Transverse colon (tissue), 4 donors: ENCODE measurements at regions of chr5 and their contacts with region 1.

Region 1: GRCh38 chr5:61055434-61056006 is 106.7 kb downstream of the SMIM15 start:
- DNase-seq: no peak
- H3K4me3 ChIP-seq: no peak overlapping the region
- H3K27ac ChIP-seq: no peak overlapping the region
- H3K4me1 ChIP-seq: peaks cover 0 to 21% (median 6%) of the 10 kb centered on the region in 4 donors
- H3K27me3 ChIP-seq: no peaks in the 10 kb centered on the region
- CTCF ChIP-seq: peak; percentile 53 to 77 (median 65)
- EP300 ChIP-seq: no peak
- POLR2A ChIP-seq: no peak

Region 2: DNA sequence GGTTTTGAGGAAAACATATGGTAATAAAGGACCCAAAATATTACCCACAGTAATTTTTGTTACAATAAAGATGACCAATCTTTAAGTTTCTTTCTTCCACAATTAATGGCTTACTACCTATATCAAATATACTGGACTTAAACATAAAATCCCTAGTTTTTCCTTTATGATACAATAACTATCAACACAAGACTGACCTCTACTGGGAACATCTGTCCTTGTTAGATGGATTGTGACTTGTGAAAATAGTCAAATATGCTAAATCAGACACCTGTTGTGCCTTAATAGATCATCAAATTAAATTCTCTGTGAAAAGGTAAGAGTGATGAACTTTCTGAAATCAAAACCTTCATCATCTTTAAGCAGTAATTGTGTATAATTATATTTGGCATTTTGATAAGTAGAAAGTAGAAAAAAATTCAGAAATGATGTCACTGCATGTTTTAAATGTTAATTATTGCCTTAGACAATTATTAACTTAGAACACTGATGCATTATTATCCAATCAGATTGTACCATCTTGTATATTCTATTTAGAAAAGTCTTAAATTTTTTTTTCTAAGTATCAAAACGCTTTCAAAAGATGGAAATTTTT is 469.1 kb before region 1 on chr5:
- in situ Hi-C with region 1: no loop called
- intact Hi-C with region 1: no loop called
- DNase-seq: no peak
- H3K4me3 ChIP-seq: no peak overlapping the region
- H3K27ac ChIP-seq: no peak overlapping the region
- H3K4me1 ChIP-seq: peaks cover 0 to 10% (median 6%) of the 10 kb centered on the region in 4 donors
- H3K27me3 ChIP-seq: no peaks in the 10 kb centered on the region
- CTCF ChIP-seq: peak in 3 of 5 experiments; percentile 24 to 52 (median 34)
- EP300 ChIP-seq: no peak
- POLR2A ChIP-seq: no peak

Region 3: GRCh38 chr5:60944904-60945812 is 110.4 kb before region 1 on chr5 and contains the starts of genes ERCC8 and NDUFAF2:
- in situ Hi-C with region 1: no loop called
- intact Hi-C with region 1: no loop called
- DNase-seq: peak; percentile 92
- H3K4me3 ChIP-seq: peak within 1 kb of the TSS; percentile 56 to 66 (median 64)
- H3K27ac ChIP-seq: peak within 1 kb of the TSS; percentile 76 to 90 (median 88)
- H3K4me1 ChIP-seq: peaks cover 0 to 23% (median 18%) of the 10 kb centered on the region in 4 donors
- H3K27me3 ChIP-seq: no peaks in the 10 kb centered on the region
- CTCF ChIP-seq: no peak
- EP300 ChIP-seq: no peak
- POLR2A ChIP-seq: peak; percentile 57
- total RNA-seq, gene ERCC8: 4.8 to 17.3 (median 11.3) TPM
- total RNA-seq, gene NDUFAF2: 8.2 to 26.5 (median 10.5) TPM

Region 4: GRCh38 chr5:61625681-61626621 is 570.4 kb after region 1 on chr5:
- in situ Hi-C with region 1: loop called in 1 of 4 experiments (anchors 25 kb)
- intact Hi-C with region 1: no loop called
- DNase-seq: peak; percentile 83
- H3K4me3 ChIP-seq: peak overlapping the region; percentile 51 to 68 (median 64)
- H3K27ac ChIP-seq: peak overlapping the region; percentile 82 to 85 (median 83)
- H3K4me1 ChIP-seq: peaks cover 0 to 19% (median 11%) of the 10 kb centered on the region in 4 donors
- H3K27me3 ChIP-seq: no peaks in the 10 kb centered on the region
- CTCF ChIP-seq: no peak
- EP300 ChIP-seq: no peak
- POLR2A ChIP-seq: peak; percentile 66

Region 5: DNA sequence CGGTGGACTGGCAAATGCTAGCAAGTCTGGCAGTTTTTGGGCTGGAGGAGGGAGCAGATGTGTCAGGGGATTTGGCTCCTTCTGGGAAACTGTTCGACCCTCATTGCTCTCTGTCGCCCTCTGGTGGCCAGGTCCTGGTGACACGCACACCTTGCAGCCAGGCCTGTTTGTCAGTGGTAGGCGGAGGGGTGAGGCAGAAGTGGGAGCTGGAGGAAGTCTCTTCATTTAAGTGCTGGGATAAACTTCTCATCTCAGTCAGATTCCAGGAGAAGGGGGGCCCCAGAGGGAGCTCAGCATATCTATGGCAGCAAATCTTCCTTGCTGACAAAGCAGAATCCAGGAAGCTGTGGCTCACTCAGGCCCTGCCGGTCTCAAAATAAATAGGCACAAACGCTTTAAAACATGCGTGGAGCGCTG is 603.1 kb after region 1 on chr5:
- in situ Hi-C with region 1: loop called in 2 of 4 experiments (anchors 25 kb)
- intact Hi-C with region 1: loop called (anchors 5 kb)
- DNase-seq: peak; percentile 88
- H3K4me3 ChIP-seq: no peak overlapping the region
- H3K27ac ChIP-seq: no peak overlapping the region
- H3K4me1 ChIP-seq: no peaks in the 10 kb centered on the region
- H3K27me3 ChIP-seq: no peaks in the 10 kb centered on the region
- CTCF ChIP-seq: peak; percentile 90 to 94 (median 91)
- EP300 ChIP-seq: no peak
- POLR2A ChIP-seq: no peak